PC-9 (cell line): ENCODE measurements at regions of chr1 and their contacts with region 1.

Region 1: DNA sequence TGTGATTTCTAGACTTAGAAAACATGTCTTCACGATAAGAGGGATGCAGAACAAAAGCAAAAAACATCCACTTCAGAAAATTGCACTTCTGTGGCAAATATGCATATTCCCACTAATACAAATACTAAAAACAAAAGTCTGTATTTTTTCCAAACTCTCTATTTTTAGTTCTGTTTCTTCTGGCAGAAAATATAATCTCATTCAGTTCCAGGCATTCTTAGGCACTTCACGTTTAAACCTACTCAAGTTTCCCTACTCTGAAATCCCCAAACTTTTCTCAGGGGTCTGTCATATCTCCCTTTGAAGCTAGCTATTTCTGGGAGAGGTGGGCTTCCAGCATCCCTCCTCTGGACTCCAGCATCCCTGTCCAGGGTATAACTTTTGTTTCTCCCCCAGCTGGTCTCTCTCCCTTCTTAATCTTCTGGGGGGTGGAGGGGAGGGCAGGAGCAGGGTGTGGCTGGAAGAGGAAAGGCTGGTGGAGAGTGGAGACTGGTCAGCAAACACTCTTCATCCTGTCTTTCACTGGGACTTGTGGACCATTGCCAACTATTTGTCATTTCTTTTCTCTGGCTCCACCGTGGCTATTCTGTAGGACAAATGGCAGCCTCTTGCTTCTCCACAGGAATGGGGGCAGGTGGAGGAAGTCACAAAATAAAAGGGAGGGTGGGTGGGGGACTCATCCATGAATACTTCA is 19.6 kb upstream of the NCF2 start:
- DNase-seq: peak in 1 of 2 experiments; percentile 46
- H3K4me3 ChIP-seq: no peak overlapping the region
- H3K27ac ChIP-seq: peak overlapping the region; percentile 94
- H3K4me1 ChIP-seq: peaks cover 60% of the 10 kb centered on the region
- H3K27me3 ChIP-seq: no peaks in the 10 kb centered on the region
- CTCF ChIP-seq: no peak

Region 2: DNA sequence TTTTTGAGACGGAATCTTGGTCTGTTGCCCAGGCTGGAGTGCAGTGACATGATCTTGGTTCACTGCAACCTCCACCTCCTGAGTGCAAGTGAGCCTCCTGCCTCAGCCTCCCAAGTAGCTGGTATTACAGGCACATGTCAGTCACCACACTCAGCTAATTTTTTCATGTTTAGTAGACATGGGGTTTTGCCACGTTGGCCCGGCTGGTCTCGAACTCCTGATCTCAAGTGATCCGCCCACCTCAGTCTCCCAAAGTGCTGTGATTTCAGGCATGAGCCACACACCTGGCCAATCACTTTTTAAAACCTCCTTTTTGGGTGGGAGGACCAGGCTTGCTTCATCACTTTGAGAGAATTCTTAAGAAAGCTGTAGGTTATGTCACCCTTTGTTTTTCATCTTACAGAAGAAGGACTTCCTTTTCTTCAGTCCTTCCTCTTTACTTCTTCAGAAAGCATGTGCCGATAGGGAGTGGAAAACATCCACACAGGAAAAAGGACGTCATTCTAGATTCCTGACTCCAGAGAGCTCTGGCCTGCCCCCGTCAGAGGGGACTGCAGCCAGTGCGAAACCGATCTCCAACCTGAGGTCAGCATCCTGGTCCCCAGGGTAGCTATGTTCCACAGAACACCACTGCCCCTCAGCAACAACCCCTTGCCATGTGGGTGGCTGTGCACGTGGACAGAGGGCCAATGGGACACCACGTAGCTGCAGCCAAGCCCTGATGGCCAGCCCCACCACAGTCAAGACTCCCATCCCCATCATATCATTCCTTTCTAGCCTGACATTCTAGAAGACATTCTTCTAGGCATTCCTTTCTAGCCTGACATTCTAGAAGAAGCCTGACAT is 41.5 kb before region 1 on chr1:
- CTCF ChIA-PET with region 1: no interaction called
- POLR2A ChIA-PET with region 1: interaction called, 14 read pairs
- intact Hi-C with region 1: loop called (anchors 1 kb)
- DNase-seq: peak in 1 of 2 experiments; percentile 38
- H3K4me3 ChIP-seq: peak overlapping the region; percentile 53; the same call in 1 of the 2 replicates
- H3K27ac ChIP-seq: peak overlapping the region; percentile 94
- H3K4me1 ChIP-seq: peaks cover 35% of the 10 kb centered on the region
- H3K27me3 ChIP-seq: no peaks in the 10 kb centered on the region
- CTCF ChIP-seq: no peak